Head of caudate nucleus (tissue), 42 donors: ENCODE measurements at regions of chr11 and their contacts with region 1.

Region 1: DNA sequence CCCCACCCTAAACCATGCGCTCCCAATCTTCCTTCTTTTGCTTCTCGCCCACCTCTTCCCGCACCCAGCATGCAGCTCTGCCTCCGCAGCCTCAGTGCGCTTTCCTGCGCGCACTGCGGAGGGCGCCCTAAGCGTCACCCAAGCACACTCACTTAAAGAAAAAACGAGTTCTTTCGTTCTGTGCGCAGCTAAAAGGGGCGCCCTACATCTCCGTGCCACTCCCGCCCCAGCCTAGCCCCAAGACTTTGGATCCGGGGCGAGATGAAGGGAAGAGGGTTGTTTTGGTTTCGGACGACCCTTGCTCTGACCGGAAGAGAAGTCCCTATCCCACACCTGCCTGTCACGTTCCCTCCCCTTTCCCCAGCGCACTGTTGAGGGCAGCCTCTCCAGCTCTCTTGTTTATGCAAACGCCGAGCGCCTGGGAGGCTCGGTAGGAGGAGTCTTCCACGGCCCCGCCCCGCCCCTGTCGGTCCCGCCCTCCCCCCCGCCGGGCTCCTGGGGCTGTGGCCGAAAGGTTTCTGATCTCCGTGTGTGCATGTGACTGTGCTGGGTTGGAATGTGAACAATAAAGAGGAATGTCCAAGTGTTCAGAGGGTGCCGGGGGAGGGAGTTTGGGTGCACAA is 5.3 kb downstream of the VSIG2 start:
- DNase-seq: peak in 37 of 42 donors; percentile 46 to 87 (median 73)

Region 2: DNA sequence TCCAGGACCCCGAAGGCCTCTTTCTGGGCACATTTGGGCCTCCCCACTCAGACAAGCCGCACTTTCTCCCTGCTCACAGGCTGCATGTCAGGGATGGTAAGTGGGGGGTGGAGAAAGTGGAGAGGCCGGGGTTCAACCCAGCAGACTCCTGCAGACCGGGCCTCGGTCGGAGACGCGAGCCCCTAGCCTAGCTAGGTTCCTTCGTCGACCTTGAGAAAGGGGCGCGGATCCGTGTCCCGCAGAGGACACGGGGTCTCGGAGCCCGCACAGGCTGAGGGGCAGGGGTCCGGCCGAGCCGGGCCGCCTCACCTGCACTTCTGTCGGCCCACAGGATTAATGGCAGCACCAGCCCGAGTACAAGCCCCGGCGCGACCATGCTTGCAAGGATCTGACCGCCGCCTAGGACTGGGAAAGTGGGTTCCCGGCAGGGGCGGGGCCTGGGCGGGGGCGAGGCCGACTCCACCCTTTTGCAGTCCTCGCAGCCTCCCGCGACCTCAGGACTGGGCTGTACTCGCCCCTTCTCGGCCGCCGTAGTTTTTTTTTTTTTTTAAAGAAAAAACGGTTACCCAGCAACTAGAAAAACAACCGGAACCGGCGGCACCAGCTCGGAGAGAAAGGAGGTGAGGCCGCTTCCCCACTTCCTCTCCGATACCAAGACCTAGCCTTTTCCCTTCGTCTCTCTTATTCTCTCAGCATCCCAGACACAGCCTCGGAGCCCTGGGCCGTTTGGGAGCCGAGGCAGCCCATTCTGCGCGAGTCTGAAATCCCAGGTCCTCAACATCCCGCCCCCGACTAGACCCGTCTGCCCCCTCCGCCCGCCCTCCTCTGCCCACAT is 73.2 kb before region 1 on chr11 and contains the starts of genes SIAE and SPA17:
- intact Hi-C with region 1: loop called (anchors 5 kb)
- DNase-seq: peak; percentile 78 to 96 (median 91)

Region 3: DNA sequence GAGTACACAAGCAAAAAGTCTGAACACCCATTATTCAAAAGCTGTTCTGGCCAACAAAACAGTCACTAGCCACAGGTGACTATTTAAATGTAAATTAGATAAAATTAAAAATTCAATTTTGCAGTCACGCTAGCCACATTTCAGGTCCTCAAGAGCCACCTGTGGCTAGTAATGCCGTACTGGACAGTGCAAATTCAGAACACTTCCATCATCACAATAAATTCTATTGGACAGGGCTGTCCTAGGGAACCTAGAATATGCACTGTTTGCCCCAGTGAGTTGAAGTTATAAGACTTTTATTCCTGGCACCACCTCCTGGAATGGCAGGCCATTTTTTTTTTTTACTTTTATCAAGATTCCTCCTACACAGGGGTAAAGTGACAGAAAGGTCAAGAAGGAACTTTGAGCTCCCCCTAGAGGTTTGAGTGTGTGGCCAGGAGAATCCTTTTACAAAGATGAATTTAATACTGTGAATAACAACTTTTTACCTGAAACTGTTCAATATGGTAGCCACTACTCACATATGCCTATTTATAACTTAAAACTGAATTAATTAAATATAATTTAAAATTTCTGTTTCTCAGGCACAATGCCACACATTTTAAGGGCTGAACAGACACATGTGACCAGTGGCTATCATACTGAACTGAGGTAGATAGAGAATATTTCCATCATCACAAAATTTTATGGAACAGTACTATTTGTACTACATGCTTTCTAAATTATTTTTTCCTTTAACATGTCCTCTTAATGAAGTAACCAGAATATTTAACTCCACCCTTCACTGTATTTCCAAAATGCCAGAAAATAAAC is 46.9 kb after region 1 on chr11:
- intact Hi-C with region 1: no loop called
- DNase-seq: peak in 3 of 42 donors; percentile 13 to 47 (median 31)

Region 4: GRCh38 chr11:124842305-124842704 is 95.6 kb after region 1 on chr11:
- intact Hi-C with region 1: no loop called
- DNase-seq: no peak